A673 (cell line): ENCODE measurements at regions of chr3 and their contacts with region 1.

Region 1: GRCh38 chr3:39288300-39288808 is 8.5 kb upstream of the CX3CR1 start:
- DNase-seq: peak; percentile 67
- H3K4me3 ChIP-seq: no peak overlapping the region
- H3K27ac ChIP-seq: no peak overlapping the region
- H3K4me1 ChIP-seq: no peaks in the 10 kb centered on the region
- H3K27me3 ChIP-seq: no peaks in the 10 kb centered on the region
- CTCF ChIP-seq: peak; percentile 75

Region 2: DNA sequence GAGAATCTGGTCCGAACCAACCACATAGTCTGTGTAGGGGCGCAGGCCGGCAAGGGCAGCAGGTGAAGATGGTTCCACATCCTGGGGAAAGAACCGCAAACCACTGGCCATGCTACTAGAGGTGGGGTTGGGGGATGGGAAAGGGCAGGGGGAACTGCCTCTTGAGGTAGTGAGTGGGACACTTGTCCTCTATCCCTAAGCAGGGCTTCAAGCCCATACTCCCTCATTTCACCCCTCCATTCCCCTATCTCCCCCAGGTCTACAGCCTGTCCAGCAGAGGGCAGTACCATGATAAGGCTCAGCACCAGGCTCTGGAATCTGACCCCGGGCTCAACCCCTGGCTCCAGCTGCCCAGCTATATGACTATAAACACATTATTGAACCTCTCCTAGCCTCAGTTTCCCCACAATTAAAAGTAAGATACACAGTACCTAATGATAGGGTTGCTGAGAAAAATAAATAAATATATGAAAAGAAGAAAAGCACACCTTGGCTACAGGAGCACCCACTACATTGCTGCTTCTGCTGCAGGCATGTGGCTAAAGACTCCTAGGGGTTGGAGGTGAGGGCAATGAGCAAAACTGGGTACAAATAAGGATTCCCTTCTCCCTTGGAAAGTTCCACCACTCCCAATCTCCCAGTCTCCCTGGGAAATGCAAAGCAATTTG is 187.2 kb before region 1 on chr3:
- CTCF ChIA-PET with region 1: no interaction called
- POLR2A ChIA-PET with region 1: no interaction called
- intact Hi-C with region 1: loop called (anchors 5 kb)
- DNase-seq: no peak
- H3K4me3 ChIP-seq: no peak overlapping the region
- H3K27ac ChIP-seq: no peak overlapping the region
- H3K4me1 ChIP-seq: no peaks in the 10 kb centered on the region
- H3K27me3 ChIP-seq: no peaks in the 10 kb centered on the region
- CTCF ChIP-seq: peak; percentile 51

Region 3: DNA sequence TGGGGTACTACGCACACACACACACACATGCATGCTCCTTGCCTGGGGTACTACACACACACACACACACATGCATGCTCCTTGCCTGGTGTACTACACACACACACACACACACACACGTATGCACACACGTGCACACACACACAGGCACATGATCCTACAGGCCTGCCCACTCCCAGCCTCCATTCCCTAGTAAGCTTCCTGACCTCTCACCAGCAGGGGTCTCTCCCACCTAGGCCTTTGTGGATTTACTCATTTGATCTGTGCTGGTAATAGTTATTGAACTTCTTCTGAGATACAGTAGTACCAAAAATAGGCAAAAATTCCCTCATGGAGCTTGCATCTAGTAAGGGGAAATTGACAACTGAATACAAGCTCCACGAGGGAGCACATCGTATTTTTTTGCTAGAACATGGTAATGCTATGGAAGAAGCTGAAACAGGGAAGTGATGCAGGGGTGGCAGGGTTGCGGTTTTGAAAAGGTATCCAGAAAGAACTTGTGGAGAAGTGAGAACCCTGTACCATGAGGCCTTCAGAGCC is 161.8 kb before region 1 on chr3:
- CTCF ChIA-PET with region 1: interaction called, 27 read pairs
- POLR2A ChIA-PET with region 1: no interaction called
- intact Hi-C with region 1: loop called (anchors 2 kb)
- DNase-seq: peak; percentile 40
- H3K4me3 ChIP-seq: no peak overlapping the region
- H3K27ac ChIP-seq: no peak overlapping the region
- H3K4me1 ChIP-seq: no peaks in the 10 kb centered on the region
- H3K27me3 ChIP-seq: no peaks in the 10 kb centered on the region
- CTCF ChIP-seq: peak; percentile 52

Region 4: GRCh38 chr3:39189959-39190269 is 98.4 kb before region 1 on chr3:
- CTCF ChIA-PET with region 1: interaction called, 15 read pairs
- POLR2A ChIA-PET with region 1: no interaction called
- intact Hi-C with region 1: loop called (anchors 1 kb)
- DNase-seq: peak; percentile 37
- H3K4me3 ChIP-seq: no peak overlapping the region
- H3K27ac ChIP-seq: no peak overlapping the region
- H3K4me1 ChIP-seq: no peaks in the 10 kb centered on the region
- H3K27me3 ChIP-seq: no peaks in the 10 kb centered on the region
- CTCF ChIP-seq: peak; percentile 60

Region 5: GRCh38 chr3:39208463-39209055 is 79.8 kb before region 1 on chr3:
- CTCF ChIA-PET with region 1: no interaction called
- POLR2A ChIA-PET with region 1: no interaction called
- intact Hi-C with region 1: loop called (anchors 5 kb)
- DNase-seq: peak; percentile 66
- H3K4me3 ChIP-seq: no peak overlapping the region
- H3K27ac ChIP-seq: peak overlapping the region; percentile 40
- H3K4me1 ChIP-seq: peaks cover 2% of the 10 kb centered on the region
- H3K27me3 ChIP-seq: no peaks in the 10 kb centered on the region
- CTCF ChIP-seq: peak; percentile 60

Region 6: DNA sequence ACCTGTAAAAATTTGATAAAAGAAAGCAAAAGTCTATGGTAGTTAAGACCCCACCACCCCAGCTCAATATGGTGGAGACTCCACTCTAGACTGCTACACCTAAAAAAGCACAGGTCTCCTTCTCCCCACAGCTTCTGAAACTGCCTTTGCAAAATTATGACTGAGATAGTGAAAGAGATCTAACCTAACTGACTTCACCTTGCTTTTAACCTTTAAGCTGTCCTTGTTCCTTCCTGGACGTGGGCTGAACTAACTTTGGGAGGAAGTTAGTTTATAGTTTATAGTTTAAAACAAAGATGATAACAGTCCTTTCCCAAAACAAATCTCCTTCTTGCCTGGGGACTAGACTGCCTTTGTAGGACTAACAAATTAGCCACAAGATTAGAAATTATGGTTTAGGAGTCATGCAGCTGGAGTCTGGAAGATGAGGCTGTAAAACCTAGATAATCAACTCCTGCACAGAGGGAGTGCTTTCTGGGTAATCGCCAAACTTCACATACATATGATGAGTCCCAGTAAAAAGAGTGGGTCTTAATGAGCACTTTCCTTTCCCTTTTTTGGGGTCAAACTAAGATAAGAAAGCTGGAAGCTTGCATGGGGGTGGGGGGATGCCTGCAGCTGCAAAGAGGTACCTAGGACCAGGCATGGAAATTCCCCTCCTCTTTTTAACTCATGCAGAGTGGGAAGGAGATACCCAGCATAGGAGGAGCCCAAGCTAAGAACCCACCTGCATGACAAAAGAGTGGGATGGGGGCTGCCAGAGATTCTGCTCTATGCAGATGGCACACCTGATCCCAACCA is 58.6 kb after region 1 on chr3:
- CTCF ChIA-PET with region 1: no interaction called
- POLR2A ChIA-PET with region 1: no interaction called
- intact Hi-C with region 1: no loop called
- DNase-seq: no peak
- H3K4me3 ChIP-seq: no peak overlapping the region
- H3K27ac ChIP-seq: no peak overlapping the region
- H3K4me1 ChIP-seq: no peaks in the 10 kb centered on the region
- H3K27me3 ChIP-seq: no peaks in the 10 kb centered on the region
- CTCF ChIP-seq: no peak